ENCODE measurements at regions of chr15 and their contacts with region 1.

Region 1: DNA sequence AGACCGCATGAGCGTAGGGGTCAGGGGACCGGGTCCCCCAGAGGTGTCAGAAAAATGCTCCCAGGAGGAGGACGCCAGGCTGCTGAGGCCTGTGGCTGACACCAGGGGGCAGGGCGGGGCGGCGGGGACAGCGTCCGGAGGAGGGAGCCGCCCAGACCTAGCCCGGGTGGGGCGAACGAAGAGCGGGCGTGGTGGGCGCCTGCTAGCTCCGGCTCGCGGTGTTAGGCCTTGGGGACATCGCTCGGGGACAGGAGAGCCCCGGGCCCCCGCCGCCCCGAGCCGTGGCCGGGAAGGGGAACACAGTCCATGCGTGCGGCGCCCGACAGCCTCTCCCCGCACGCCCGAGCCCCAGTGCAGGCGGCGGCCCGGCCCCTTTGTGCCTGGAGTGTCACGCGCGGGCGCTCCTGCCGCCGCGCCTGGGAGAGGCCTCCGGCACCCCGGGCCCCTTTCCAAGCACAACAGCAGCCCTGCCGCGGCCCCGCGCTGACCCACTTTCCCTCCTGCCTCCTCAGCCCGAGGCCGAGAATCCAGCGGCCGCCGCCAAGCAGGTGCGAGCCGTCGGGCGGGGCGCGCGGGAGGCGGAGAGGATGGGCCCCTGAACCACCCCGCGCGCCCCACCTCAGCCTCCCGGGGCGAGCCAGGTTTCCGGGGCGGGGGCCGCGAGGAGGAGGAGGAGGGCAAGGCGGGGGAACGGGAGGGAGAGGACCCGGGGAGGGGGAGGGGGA is 111.0 kb upstream of the KLF13 start:
- DNase-seq: peak; percentile 92
- ATAC-seq: peak; percentile 74
- H3K4me3 Mint-ChIP-seq: peak overlapping the region; percentile 72
- H3K27ac Mint-ChIP-seq: peak overlapping the region; percentile 96
- H3K4me1 Mint-ChIP-seq: peaks cover 29% of the 10 kb centered on the region
- H3K27me3 Mint-ChIP-seq: peaks cover 3% of the 10 kb centered on the region

Region 2: GRCh38 chr15:31228011-31228484 is 12.4 kb after region 1 on chr15:
- POLR2A ChIA-PET with region 1: no interaction called
- DNase-seq: no peak
- ATAC-seq: no peak
- H3K4me3 Mint-ChIP-seq: no peak overlapping the region
- H3K27ac Mint-ChIP-seq: no peak overlapping the region
- H3K4me1 Mint-ChIP-seq: peaks cover 8% of the 10 kb centered on the region
- H3K27me3 Mint-ChIP-seq: peaks cover 2% of the 10 kb centered on the region

Region 3: DNA sequence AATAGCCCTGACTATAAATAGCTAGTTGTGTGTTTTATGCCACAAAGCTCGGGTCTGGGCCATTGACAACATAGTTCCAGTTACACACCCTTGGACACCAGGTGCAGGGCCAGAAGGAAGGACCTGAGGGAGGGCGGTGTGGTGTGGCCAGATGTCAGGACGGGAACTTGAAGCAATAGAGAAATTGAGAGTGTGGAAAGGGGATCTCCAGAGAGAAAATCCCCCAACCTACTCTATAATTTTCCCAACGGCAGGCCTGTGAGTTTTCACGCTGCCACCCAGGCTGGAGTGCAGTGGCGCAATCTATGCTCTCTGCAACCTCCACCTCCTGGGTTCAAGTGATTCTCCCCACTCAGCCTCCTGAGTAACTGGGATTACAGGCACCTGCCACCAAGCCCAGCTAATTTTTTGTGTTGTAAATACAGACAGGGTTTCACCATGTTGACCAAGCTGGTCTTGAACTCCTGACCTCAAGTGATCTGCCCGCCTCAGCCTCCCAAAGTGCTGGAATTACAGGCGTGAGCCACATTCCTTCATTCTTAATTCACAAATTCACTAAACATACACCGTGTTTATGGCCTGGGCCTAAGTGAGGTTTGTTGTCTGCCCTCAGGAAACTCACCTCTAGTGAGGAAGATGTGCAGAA is 40.2 kb after region 1 on chr15:
- POLR2A ChIA-PET with region 1: no interaction called
- DNase-seq: no peak
- ATAC-seq: no peak
- H3K4me3 Mint-ChIP-seq: no peak overlapping the region
- H3K27ac Mint-ChIP-seq: no peak overlapping the region
- H3K4me1 Mint-ChIP-seq: peaks cover 31% of the 10 kb centered on the region
- H3K27me3 Mint-ChIP-seq: peaks cover 7% of the 10 kb centered on the region

Region 4: GRCh38 chr15:31265871-31266711 is 50.4 kb after region 1 on chr15:
- POLR2A ChIA-PET with region 1: interaction called, 22 read pairs
- DNase-seq: peak; percentile 73
- ATAC-seq: peak; percentile 79
- H3K4me3 Mint-ChIP-seq: peak overlapping the region; percentile 84
- H3K27ac Mint-ChIP-seq: peak overlapping the region; percentile 99
- H3K4me1 Mint-ChIP-seq: peaks cover 75% of the 10 kb centered on the region
- H3K27me3 Mint-ChIP-seq: no peaks in the 10 kb centered on the region

Region 5: GRCh38 chr15:31344823-31345605 is 129.4 kb after region 1 on chr15:
- POLR2A ChIA-PET with region 1: interaction called, 15 read pairs
- DNase-seq: peak; percentile 65
- ATAC-seq: peak; percentile 32
- H3K4me3 Mint-ChIP-seq: peak overlapping the region; percentile 95
- H3K27ac Mint-ChIP-seq: peak overlapping the region; percentile 100
- H3K4me1 Mint-ChIP-seq: peaks cover 85% of the 10 kb centered on the region
- H3K27me3 Mint-ChIP-seq: no peaks in the 10 kb centered on the region

Measured in activated naive CD8-positive, alpha-beta T cell treated with anti-CD3 and anti-CD28 coated beads, Interleukin-2, amount 10 ng/mL, durations not matched to agents 7 days and 5 days (primary cell).